ENCODE measurements at regions of chr17 and their contacts with region 1.

Region 1: DNA sequence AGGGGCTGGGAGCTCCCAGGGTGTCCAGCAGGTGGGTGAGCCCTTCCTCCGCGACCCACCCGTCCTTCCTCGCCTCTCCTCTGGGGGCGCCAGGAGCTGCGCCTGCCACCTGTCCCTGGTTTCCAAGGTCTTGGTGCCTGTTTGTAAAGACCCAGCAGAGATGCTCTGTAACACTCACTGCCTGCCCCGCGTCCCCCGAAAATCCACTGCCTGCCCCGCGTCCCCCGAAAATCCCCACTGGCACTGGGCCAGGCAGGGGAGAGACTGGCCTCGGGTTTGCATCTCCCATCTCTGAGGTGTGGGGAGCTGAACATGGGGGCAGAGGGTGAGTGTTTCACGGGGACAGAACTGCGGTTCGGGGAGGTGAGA is 45.6 kb downstream of the BAHCC1 start:
- DNase-seq: no peak
- ATAC-seq: no peak
- H3K4me3 Mint-ChIP-seq: no peak overlapping the region
- H3K27ac Mint-ChIP-seq: no peak overlapping the region
- H3K4me1 Mint-ChIP-seq: peaks cover 11% of the 10 kb centered on the region
- H3K27me3 Mint-ChIP-seq: no peaks in the 10 kb centered on the region

Region 2: DNA sequence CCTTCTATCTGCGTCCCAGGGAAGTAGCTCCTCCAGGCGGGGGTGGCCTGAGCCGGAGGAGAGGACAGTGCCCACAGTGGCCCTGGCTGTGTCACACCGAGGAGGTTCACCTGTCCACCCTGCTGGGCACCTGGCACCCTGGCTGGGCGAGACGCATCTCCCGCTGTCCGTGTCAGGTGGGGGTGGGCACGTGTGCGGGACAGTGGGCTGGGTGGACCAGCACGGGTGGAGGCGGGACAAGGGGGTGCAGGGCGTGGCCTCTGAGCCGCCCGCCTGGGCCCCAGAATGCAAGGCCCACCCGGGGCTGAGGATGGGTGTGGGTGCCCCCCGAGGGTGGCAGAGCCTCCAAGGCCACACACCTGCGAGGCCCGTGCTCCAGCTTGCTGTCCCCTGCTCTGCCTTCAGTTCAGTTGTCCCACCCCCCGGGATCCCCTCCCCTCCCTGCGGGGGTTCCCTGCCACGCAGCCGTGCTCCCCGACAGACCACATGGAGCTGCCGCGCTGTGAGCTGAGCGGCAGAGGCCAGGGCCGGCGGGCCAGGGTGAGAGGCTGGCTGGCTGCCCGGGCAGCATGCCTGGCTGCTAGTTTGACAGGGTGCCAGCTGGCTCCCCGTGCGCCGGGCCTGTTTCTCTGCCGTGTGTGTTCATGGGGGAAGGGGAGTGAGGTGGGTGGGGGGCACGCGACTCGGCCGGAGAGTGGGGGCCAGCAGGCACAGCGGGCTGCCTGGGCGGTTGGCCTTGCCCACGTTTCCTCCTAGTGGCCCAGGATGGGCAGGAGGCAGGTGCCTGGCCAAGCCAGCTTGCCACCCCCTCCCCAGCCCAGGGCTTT is 11.7 kb before region 1 on chr17:
- CTCF ChIA-PET with region 1: interaction called, 10 read pairs
- POLR2A ChIA-PET with region 1: no interaction called
- DNase-seq: no peak
- ATAC-seq: peak; percentile 16
- H3K4me3 Mint-ChIP-seq: no peak overlapping the region
- H3K27ac Mint-ChIP-seq: no peak overlapping the region
- H3K4me1 Mint-ChIP-seq: peaks cover 16% of the 10 kb centered on the region
- H3K27me3 Mint-ChIP-seq: peaks cover 24% of the 10 kb centered on the region

Measured in activated CD8-positive, alpha-beta T cell treated with anti-CD3 and anti-CD28 coated beads, Interleukin-2, amount 10 ng/mL, durations not matched to agents 7 days and 5 days (primary cell).